HEK293 (cell line): ENCODE measurements at regions of chr6 and their contacts with region 1.

Region 1: GRCh38 chr6:11595903-11596302 is 58.4 kb downstream of the TMEM170B start:
- H3K4me3 ChIP-seq: no peak overlapping the region
- H3K27ac ChIP-seq: no peak overlapping the region
- H3K4me1 ChIP-seq: no peaks in the 10 kb centered on the region
- CTCF ChIP-seq: no peak

Region 2: GRCh38 chr6:11585426-11586016 is 10.4 kb before region 1 on chr6:
- CTCF ChIA-PET with region 1: interaction called, 18 read pairs
- POLR2A ChIA-PET with region 1: no interaction called
- H3K4me3 ChIP-seq: no peak overlapping the region
- H3K27ac ChIP-seq: no peak overlapping the region
- H3K4me1 ChIP-seq: no peaks in the 10 kb centered on the region
- CTCF ChIP-seq: peak; percentile 53; the same call in 1 of the 2 replicates